PC-3 (cell line): ENCODE measurements at regions of chr18 and their contacts with region 1.

Region 1: GRCh38 chr18:21955757-21956652 is 213.4 kb upstream of the GATA6 start:
- DNase-seq: peak; percentile 81
- ATAC-seq: peak; percentile 99
- H3K4me3 ChIP-seq: no peak overlapping the region
- H3K27ac ChIP-seq: no peak overlapping the region
- H3K4me1 ChIP-seq: no peaks in the 10 kb centered on the region
- H3K27me3 ChIP-seq: no peaks in the 10 kb centered on the region
- CTCF ChIP-seq: peak; percentile 95

Region 2: DNA sequence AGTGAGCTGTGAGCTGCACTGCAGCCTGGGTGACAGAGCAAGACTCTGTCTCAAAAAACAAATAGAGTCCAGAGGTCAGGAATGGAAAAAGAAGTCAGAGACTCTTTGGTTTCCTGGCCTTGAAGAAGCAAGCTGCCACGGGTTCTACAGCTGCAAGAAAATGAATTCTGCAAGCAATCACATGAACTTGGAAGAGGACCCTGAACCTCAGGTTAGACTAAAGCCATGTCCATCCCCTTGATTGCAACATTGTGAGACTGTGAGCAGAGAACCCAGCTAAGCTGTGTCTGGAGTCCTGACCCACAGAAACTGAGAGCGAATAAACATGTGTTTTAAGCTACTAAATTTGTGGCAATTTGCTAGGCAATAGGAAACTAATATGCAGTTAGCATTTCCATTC is 228.3 kb before region 1 on chr18:
- CTCF ChIA-PET with region 1: no interaction called
- POLR2A ChIA-PET with region 1: interaction called, 22 read pairs
- intact Hi-C with region 1: no loop called
- DNase-seq: no peak
- ATAC-seq: no peak
- H3K4me3 ChIP-seq: no peak overlapping the region
- H3K27ac ChIP-seq: no peak overlapping the region
- H3K4me1 ChIP-seq: peaks cover 5% of the 10 kb centered on the region
- H3K27me3 ChIP-seq: no peaks in the 10 kb centered on the region
- CTCF ChIP-seq: no peak

Region 3: DNA sequence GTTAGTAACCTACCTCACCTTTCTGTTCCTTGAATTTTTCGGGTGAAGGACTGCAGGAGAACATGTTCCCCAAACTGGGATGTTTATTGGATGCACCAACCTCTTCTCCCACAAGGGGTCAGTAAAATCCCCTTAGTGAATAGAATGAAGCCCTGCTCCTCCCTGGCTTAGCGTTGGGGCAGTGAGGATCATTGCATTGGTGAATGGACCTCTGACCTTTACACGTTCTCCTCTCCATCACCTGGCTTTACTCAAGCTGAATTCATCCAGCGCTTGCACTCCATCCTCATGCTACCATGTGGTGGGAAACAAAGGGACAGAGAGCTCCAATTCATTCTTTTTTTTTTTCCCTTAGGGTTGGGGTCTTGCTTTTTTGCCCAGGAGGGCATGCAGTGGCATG is 58.2 kb before region 1 on chr18:
- CTCF ChIA-PET with region 1: no interaction called
- POLR2A ChIA-PET with region 1: no interaction called
- intact Hi-C with region 1: loop called (anchors 5 kb)
- DNase-seq: peak; percentile 77
- ATAC-seq: peak; percentile 74
- H3K4me3 ChIP-seq: no peak overlapping the region
- H3K27ac ChIP-seq: no peak overlapping the region
- H3K4me1 ChIP-seq: no peaks in the 10 kb centered on the region
- H3K27me3 ChIP-seq: no peaks in the 10 kb centered on the region
- CTCF ChIP-seq: peak; percentile 87

Region 4: DNA sequence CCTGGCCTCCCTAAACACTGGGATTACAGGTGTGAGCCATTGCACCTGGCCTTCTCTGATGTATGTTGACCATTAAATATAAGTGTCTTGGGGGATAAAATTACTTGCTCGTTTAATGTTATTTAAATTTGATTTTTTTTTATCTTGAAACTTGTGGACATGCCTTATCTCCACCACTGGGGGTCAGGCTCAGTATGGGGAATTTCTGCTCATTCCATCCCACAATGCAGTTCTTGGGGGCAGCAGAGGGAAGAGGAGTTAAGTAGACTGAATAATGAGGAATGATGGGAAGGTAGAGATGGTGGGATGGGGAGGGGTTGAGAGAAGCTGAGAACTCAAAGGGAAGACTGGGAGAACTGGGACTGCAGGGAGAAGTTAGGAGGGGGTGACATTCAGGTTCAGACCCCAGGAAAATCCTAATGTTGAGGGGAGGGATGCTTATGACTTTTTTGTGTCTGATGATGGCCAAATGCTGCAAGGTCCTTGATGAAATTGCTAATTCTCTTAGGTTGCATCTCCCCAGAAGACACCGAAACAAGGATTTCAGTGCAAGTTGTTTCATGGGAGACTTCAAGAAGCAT is 41.2 kb before region 1 on chr18:
- CTCF ChIA-PET with region 1: no interaction called
- POLR2A ChIA-PET with region 1: no interaction called
- intact Hi-C with region 1: loop called (anchors 1 kb)
- DNase-seq: peak; percentile 67
- ATAC-seq: peak; percentile 67
- H3K4me3 ChIP-seq: no peak overlapping the region
- H3K27ac ChIP-seq: no peak overlapping the region
- H3K4me1 ChIP-seq: no peaks in the 10 kb centered on the region
- H3K27me3 ChIP-seq: no peaks in the 10 kb centered on the region
- CTCF ChIP-seq: peak; percentile 87